ENCODE measurements at regions of chr14 and their contacts with region 1.

Region 1: DNA sequence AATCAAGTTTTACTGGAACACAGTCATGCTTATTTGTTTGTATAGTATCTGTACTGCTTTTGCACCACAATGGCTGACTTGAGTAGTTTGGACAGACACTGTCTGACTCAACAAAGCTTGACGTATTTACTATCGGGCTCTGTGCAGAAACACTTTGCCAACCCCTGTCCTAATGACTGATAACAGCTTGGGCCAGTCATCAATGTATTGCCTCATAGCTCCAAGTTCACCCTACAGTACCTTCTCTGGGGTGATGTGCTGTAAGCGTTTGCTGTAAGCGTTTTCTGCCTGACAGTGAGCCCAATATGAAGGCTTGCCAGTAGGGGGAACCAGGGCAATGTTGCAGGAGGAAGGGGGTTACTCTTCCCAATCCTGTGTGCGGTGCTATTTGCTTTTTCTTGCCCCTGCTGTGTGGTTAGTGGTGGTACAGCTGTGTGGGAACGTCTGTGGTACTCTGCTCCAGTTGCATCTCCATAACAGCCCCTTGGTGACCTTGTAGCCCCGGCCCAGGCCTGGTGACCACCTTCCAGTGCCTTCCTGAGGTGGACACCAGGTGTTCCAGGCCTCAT is 5.4 kb upstream of the CCDC177 start:
- DNase-seq: no peak
- H3K4me3 ChIP-seq: no peak overlapping the region
- H3K4me3 Mint-ChIP-seq: no peak overlapping the region
- H3K27ac ChIP-seq: no peak overlapping the region
- H3K27ac Mint-ChIP-seq: peak overlapping the region in 1 of 8 donors; percentile 40
- H3K4me1 ChIP-seq: no peaks in the 10 kb centered on the region
- H3K4me1 Mint-ChIP-seq: no peaks in the 10 kb centered on the region
- H3K27me3 ChIP-seq: peaks cover 6% of the 10 kb centered on the region
- H3K27me3 Mint-ChIP-seq: peaks cover 7 to 20% of the 10 kb centered on the region in 2 donors

Region 2: DNA sequence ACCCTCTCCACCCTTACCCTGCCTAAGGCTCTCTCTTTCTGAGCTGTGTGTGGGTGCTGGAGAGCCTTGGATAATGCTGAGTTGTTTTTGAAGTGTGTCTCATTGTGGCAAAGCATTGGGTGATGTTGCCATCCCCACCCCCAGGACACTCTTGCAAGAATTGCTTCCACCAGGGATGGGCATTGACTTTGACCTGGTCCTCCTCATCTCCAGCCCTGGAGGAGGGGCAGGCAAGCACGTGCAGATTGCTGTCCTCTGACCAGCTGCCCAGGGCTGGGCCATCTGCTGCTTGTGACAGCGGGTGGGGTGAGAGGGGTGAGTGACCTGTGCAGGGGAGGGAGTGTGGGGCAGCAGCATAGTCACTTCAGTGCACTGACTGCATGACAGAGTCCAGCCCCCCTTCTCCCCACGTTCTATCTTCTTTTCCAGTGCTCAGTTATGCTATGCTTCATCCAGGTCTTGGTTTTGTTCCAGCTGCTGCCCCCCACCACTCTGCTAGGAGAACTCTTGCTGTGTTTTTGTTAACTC is 57.5 kb after region 1 on chr14:
- CTCF ChIA-PET with region 1: no interaction called
- POLR2A ChIA-PET with region 1: no interaction called
- DNase-seq: no peak
- H3K4me3 ChIP-seq: no peak overlapping the region
- H3K4me3 Mint-ChIP-seq: peak overlapping the region in 6 of 7 donors; percentile 1 to 74 (median 56)
- H3K27ac ChIP-seq: no peak overlapping the region
- H3K27ac Mint-ChIP-seq: peak overlapping the region; percentile 58 to 93 (median 82)
- H3K4me1 ChIP-seq: peaks cover 70% of the 10 kb centered on the region
- H3K4me1 Mint-ChIP-seq: peaks cover 82 to 93% (median 88%) of the 10 kb centered on the region in 3 donors
- H3K27me3 ChIP-seq: no peaks in the 10 kb centered on the region
- H3K27me3 Mint-ChIP-seq: no peaks in the 10 kb centered on the region

Region 3: GRCh38 chr14:69726761-69727511 is 146.8 kb after region 1 on chr14:
- CTCF ChIA-PET with region 1: interaction called, 50 read pairs
- POLR2A ChIA-PET with region 1: no interaction called
- DNase-seq: peak; percentile 76 to 83 (median 78)
- H3K4me3 ChIP-seq: peak overlapping the region; percentile 51
- H3K4me3 Mint-ChIP-seq: peak overlapping the region; percentile 10 to 87 (median 78)
- H3K27ac ChIP-seq: peak overlapping the region; percentile 43
- H3K27ac Mint-ChIP-seq: peak overlapping the region; percentile 51 to 97 (median 88)
- H3K4me1 ChIP-seq: peaks cover 11% of the 10 kb centered on the region
- H3K4me1 Mint-ChIP-seq: peaks cover 20 to 36% (median 28%) of the 10 kb centered on the region in 3 donors
- H3K27me3 ChIP-seq: no peaks in the 10 kb centered on the region
- H3K27me3 Mint-ChIP-seq: no peaks in the 10 kb centered on the region

Measured in CD8-positive, alpha-beta memory T cell (primary cell).